ENCODE measurements at regions of chr9 and their contacts with region 1.

Region 1: DNA sequence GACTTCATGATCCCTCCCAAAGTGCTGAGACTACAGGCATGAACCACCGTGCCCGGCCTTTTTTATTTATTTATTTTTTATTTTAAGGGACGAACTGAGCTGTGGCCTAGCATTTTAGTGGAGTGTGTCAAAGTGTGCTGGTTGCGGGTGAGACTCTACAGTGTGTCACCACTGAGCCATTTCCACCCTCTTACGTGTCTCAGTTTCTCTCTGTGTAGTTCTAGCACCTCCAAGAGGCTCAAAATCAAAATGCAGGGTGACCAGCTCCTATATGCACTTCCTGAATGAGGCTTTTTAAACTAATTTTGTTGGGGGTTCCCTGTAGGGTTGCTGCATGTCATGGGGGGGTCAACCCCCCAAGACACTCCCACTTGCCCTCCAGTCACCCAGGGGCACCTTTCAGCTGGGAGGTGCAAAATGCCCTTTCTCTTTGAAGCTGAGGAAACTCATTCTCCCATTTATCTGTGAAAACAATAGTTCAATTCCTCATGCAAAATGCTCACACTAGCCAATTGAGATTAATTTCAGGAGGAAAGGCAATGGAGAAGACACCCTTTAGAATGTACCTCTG is 69.3 kb downstream of the COL15A1 start:
- DNase-seq: peak; percentile 38
- ATAC-seq: peak; percentile 49
- H3K4me3 Mint-ChIP-seq: peak overlapping the region; percentile 63
- H3K27ac Mint-ChIP-seq: peak overlapping the region; percentile 99
- H3K4me1 Mint-ChIP-seq: peaks cover 37% of the 10 kb centered on the region
- H3K27me3 Mint-ChIP-seq: no peaks in the 10 kb centered on the region

Region 2: GRCh38 chr9:98848450-98849149 is 164.4 kb before region 1 on chr9:
- CTCF ChIA-PET with region 1: interaction called, 14 read pairs
- POLR2A ChIA-PET with region 1: no interaction called
- DNase-seq: peak; percentile 86
- ATAC-seq: peak; percentile 95
- H3K4me3 Mint-ChIP-seq: no peak overlapping the region
- H3K27ac Mint-ChIP-seq: no peak overlapping the region
- H3K4me1 Mint-ChIP-seq: peaks cover 9% of the 10 kb centered on the region
- H3K27me3 Mint-ChIP-seq: no peaks in the 10 kb centered on the region

Region 3: GRCh38 chr9:98974994-98975712 is 37.9 kb before region 1 on chr9:
- CTCF ChIA-PET with region 1: interaction called, 27 read pairs
- POLR2A ChIA-PET with region 1: no interaction called
- DNase-seq: peak; percentile 87
- ATAC-seq: peak; percentile 96
- H3K4me3 Mint-ChIP-seq: peak overlapping the region; percentile 4
- H3K27ac Mint-ChIP-seq: no peak overlapping the region
- H3K4me1 Mint-ChIP-seq: peaks cover 16% of the 10 kb centered on the region
- H3K27me3 Mint-ChIP-seq: peaks cover 20% of the 10 kb centered on the region

Region 4: DNA sequence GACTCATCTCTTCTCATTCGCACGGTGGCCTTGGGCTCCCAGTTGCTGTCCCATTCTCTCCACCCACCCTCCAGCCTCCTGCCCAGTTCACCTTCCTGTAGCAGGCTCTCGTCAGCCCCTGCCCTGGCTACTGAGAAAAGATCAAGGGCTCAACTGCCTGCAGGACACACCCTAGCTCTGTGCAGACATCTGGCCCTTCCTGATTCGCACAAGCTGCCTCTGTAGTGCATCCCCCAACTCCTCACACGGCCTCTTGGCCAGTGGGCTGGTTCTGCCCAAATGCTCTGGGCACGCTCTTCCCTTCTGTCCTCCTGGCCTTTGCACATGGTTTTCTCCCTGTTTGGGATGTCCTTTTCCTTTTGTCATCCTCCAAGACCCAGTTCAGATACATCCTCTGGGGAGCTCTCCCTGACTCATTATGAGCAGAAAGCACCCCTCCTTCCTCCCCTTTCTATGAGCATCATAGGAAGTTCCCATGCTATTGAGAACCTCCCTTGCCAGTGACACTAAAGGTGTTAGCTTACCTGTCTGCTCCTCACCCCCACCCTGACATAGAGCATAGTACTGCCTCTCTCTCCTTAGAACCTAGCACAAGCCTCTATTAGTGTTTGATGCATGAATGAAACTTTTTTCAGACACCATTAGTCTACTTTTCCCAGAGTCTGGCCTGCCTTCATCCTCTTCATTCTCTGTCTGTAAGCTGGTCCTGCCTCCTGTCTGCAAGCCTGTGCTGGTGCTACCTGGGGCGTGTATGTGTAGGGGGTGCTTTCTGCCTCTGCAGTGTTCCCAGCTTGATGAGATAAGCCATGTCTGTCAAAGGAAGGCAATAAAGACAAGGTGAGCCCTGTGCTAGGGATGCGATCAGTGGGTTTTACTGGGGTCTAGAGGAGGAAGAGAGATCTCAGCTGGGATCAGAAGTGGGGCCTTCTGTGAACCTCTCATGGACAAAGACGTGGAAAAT is 13.6 kb after region 1 on chr9:
- CTCF ChIA-PET with region 1: interaction called, 24 read pairs
- POLR2A ChIA-PET with region 1: interaction called, 3 read pairs
- DNase-seq: no peak
- ATAC-seq: no peak
- H3K4me3 Mint-ChIP-seq: no peak overlapping the region
- H3K27ac Mint-ChIP-seq: peak overlapping the region; percentile 5
- H3K4me1 Mint-ChIP-seq: peaks cover 45% of the 10 kb centered on the region
- H3K27me3 Mint-ChIP-seq: peaks cover 2% of the 10 kb centered on the region

Region 5: GRCh38 chr9:99057665-99058625 is 44.9 kb after region 1 on chr9:
- CTCF ChIA-PET with region 1: interaction called, 29 read pairs
- POLR2A ChIA-PET with region 1: interaction called, 8 read pairs
- DNase-seq: peak; percentile 94
- ATAC-seq: peak; percentile 82
- H3K4me3 Mint-ChIP-seq: peak overlapping the region; percentile 78
- H3K27ac Mint-ChIP-seq: peak overlapping the region; percentile 98
- H3K4me1 Mint-ChIP-seq: peaks cover 82% of the 10 kb centered on the region
- H3K27me3 Mint-ChIP-seq: no peaks in the 10 kb centered on the region

Region 6: DNA sequence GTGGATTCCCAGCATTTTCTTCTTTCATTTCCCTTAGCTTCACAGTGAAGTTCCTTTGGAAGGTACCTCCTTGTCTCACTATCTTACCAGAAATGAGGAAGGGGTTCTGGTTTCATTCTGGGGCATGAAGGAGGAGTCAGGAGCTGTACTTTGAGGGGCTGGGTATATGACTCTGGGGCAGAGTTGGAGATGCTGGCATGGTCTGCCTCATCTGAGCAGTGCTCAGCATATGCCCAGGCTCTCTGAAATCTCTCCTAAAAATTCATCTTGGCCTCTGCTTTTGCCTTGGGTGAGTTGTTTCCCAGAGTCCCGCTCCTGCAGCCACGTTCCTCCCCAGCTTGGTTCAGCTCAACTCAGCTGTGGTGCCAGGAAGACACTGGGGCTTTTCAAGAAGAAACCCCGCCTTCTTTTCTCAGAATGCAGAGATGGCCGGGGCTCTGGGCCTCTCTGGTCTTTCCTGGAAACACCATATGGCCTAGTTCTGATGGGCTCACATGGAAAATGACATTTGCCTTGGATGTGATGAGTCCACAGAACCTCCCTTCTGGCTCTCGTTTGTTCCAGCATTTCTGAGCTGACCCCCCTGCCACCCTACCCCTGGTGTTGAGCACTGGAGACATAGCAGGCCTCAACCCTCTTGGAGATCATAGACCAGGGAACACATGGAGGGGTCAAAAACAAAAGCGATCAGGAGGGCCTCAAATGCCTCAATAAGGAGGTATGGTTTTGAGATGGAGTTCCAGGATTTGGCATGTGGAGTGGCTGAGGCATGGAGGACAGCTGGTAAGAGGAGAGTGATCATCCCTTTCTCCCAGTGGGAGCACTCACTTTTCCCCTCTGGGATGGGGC is 79.8 kb after region 1 on chr9:
- CTCF ChIA-PET with region 1: interaction called, 19 read pairs
- POLR2A ChIA-PET with region 1: interaction called, 3 read pairs
- DNase-seq: peak; percentile 86
- ATAC-seq: peak; percentile 88
- H3K4me3 Mint-ChIP-seq: peak overlapping the region; percentile 66
- H3K27ac Mint-ChIP-seq: peak overlapping the region; percentile 98
- H3K4me1 Mint-ChIP-seq: peaks cover 81% of the 10 kb centered on the region
- H3K27me3 Mint-ChIP-seq: no peaks in the 10 kb centered on the region

Region 7: DNA sequence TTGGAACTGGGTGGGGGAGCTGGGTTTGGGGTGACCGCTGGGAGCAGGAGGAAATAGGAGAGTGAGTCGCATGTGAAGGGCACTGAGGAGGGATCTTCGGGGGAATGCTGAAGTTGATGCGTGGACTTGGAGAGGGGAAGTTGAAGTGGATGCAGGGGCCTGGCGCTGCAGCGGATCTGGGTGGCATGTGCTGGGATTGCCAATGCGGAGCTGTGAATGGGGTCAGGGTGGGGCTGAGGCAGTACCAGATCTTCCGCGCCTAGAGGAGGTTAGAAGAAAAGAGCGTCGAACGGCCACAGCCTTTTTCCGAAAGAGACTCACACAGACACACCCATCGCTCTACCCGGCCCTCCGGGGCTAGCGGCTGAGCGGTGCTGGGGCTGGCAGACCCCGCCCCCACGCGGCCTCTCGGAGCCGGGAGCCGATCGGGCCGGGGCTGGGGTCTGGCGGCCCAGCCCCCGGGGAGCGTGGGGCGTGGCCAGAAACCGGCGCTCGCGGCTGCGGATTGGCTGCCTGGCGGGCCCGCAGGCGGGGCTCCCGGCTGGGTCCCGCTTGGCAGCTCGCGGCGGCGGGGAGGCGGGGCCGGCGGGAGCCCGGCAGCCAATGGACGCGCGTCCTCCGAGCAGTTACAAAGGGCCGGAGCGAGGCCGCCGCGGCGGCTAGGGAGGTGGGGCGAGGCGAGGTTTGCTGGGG is 91.6 kb after region 1 on chr9 and contains the start of gene TGFBR1:
- CTCF ChIA-PET with region 1: interaction called, 42 read pairs
- POLR2A ChIA-PET with region 1: interaction called, 8 read pairs
- DNase-seq: peak; percentile 94
- ATAC-seq: peak; percentile 90
- H3K4me3 Mint-ChIP-seq: peak within 1 kb of the TSS; percentile 89
- H3K27ac Mint-ChIP-seq: peak within 1 kb of the TSS; percentile 92
- H3K4me1 Mint-ChIP-seq: peaks cover 76% of the 10 kb centered on the region
- H3K27me3 Mint-ChIP-seq: no peaks in the 10 kb centered on the region
- total RNA-seq, gene TGFBR1: 90.1 to 90.9 TPM

Region 8: DNA sequence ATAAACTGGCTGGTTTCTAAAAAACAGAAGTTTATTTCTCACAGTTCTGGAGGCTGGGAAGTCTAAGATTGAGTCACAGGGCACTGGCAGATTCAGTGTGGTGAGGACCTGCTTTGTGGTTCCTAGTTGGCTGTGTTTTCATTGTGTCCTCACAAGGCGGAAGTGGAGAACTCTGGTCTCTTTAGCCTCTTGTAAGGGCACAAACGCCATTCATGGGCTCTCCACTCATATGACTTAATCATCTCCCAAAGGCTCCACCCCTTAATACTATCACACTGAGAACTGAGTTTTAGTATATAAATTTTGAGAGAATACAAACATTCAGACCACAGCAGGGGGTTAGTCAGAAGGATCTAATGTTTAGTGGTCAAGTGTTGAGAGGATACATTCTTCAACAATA is 417.3 kb after region 1 on chr9:
- CTCF ChIA-PET with region 1: no interaction called
- POLR2A ChIA-PET with region 1: no interaction called
- DNase-seq: no peak
- ATAC-seq: no peak
- H3K4me3 Mint-ChIP-seq: no peak overlapping the region
- H3K27ac Mint-ChIP-seq: no peak overlapping the region
- H3K4me1 Mint-ChIP-seq: peaks cover 16% of the 10 kb centered on the region
- H3K27me3 Mint-ChIP-seq: peaks cover 17% of the 10 kb centered on the region